ENCODE measurements at regions of chr2 and their contacts with region 1.

Region 1: DNA sequence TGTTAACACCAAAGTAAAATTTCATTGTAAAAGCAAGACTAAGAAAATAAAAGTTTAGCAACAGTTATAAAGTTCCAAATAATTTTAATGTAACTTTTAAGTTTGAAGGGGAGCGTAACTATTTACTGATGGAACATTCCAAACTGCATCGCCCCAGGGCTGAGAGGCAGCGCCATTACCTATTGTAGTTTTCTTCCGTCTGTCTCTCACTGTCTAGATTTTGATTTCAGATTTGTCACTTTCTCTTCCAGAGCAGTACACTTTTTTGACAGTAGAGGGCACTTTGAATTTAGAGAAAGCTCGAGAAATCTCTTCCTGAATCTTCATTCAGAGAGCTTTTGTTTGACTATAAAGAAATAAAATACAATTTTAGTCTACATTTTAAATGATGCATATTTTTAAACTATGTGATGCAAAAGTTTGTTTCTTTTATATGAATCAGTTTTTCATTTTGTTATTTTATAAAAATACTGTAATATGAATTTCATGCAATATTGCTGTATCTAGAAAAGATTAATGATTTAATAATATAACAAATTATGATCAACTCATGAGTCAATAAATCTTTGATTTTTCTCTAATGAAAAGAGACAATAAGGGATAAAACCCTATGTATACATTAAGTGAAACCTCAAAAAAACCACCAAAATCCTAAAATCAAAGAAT is 389.8 kb downstream of the FIGN start:
- DNase-seq: peak in 1 of 2 experiments; percentile 20
- H3K4me3 ChIP-seq: no peak overlapping the region
- H3K27ac ChIP-seq: no peak overlapping the region
- H3K4me1 ChIP-seq: peaks cover 13% of the 10 kb centered on the region
- H3K27me3 ChIP-seq: no peaks in the 10 kb centered on the region
- CTCF ChIP-seq: peak; percentile 71

Region 2: DNA sequence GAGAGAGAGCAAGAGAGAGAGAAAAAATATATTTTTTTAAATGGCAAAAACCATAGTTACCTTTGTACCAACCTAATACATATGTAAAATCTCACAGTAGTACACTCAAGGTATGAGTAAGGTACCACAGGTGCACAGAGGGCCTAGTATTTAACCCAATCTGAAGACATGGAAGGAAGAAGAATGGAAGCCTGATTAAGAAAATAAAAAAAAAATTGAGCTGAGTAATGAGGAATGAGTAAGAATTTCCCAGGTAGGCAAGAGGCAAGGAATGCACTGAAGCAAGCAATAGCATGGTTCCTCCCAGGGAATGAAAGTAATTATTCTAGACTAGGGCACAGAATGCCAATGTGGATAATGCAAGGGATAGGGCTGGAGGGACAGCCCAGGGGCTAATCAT is 95.6 kb after region 1 on chr2:
- CTCF ChIA-PET with region 1: no interaction called
- POLR2A ChIA-PET with region 1: no interaction called
- intact Hi-C with region 1: no loop called
- DNase-seq: no peak
- H3K4me3 ChIP-seq: no peak overlapping the region
- H3K27ac ChIP-seq: no peak overlapping the region
- H3K4me1 ChIP-seq: no peaks in the 10 kb centered on the region
- H3K27me3 ChIP-seq: no peaks in the 10 kb centered on the region
- CTCF ChIP-seq: no peak

Region 3: GRCh38 chr2:163573651-163574050 is 227.6 kb after region 1 on chr2:
- CTCF ChIA-PET with region 1: no interaction called
- POLR2A ChIA-PET with region 1: no interaction called
- intact Hi-C with region 1: loop called (anchors 2 kb)
- DNase-seq: peak; percentile 20 to 36
- H3K4me3 ChIP-seq: no peak overlapping the region
- H3K27ac ChIP-seq: no peak overlapping the region
- H3K4me1 ChIP-seq: peaks cover 12% of the 10 kb centered on the region
- H3K27me3 ChIP-seq: no peaks in the 10 kb centered on the region
- CTCF ChIP-seq: no peak

Region 4: GRCh38 chr2:163735685-163736432 is 389.8 kb after region 1 on chr2 and contains the start of gene FIGN:
- CTCF ChIA-PET with region 1: interaction called, 3 read pairs
- POLR2A ChIA-PET with region 1: no interaction called
- intact Hi-C with region 1: loop called (anchors 1 kb)
- DNase-seq: peak; percentile 57 to 61
- H3K4me3 ChIP-seq: peak within 1 kb of the TSS; percentile 91
- H3K27ac ChIP-seq: peak within 1 kb of the TSS; percentile 57
- H3K4me1 ChIP-seq: no peaks in the 10 kb centered on the region
- H3K27me3 ChIP-seq: no peaks in the 10 kb centered on the region
- CTCF ChIP-seq: no peak
- total RNA-seq, gene FIGN: 3.1 and 7.4 TPM in 2 replicates

Region 5: DNA sequence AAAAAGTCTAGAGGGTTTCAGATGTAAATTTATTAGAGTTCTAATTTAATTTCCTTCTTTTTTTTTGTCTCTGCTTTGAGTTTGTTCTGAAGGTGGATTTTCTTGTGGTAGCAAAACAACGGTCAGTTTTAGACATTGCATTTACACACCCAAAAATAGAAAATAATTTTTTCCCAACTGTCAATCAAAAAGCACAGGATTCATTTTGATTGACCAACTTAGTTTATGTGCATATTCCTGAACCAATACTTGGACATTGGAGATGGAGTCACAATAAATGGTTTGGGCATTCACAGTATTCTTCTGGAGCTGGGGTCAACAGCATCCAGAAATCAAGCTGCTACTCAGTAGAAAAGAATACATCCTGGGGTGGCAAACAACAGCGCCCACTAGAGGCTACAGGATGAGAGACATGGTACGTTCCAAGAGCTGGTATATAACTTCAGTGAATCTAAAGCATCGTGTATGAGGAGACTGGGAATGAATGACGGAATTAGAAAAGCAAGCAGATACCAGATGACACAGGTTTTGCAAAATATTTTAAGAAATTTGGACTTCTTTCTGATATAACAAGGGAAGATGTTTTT is 532.6 kb after region 1 on chr2:
- CTCF ChIA-PET with region 1: no interaction called
- POLR2A ChIA-PET with region 1: no interaction called
- intact Hi-C with region 1: loop called (anchors 10 kb)
- DNase-seq: peak in 1 of 2 experiments; percentile 1
- H3K4me3 ChIP-seq: no peak overlapping the region
- H3K27ac ChIP-seq: no peak overlapping the region
- H3K4me1 ChIP-seq: no peaks in the 10 kb centered on the region
- H3K27me3 ChIP-seq: no peaks in the 10 kb centered on the region
- CTCF ChIP-seq: peak; percentile 47; the same call in 1 of the 2 replicates

Region 6: GRCh38 chr2:164134336-164134735 is 788.3 kb after region 1 on chr2:
- CTCF ChIA-PET with region 1: no interaction called
- POLR2A ChIA-PET with region 1: no interaction called
- intact Hi-C with region 1: loop called (anchors 10 kb)
- DNase-seq: no peak
- H3K4me3 ChIP-seq: no peak overlapping the region
- H3K27ac ChIP-seq: no peak overlapping the region
- H3K4me1 ChIP-seq: no peaks in the 10 kb centered on the region
- H3K27me3 ChIP-seq: no peaks in the 10 kb centered on the region
- CTCF ChIP-seq: no peak

Region 7: GRCh38 chr2:164388511-164388910 is 1042.5 kb after region 1 on chr2:
- CTCF ChIA-PET with region 1: interaction called, 3 read pairs
- POLR2A ChIA-PET with region 1: interaction called, 5 read pairs
- intact Hi-C with region 1: loop called (anchors 5 kb)
- DNase-seq: peak; percentile 56 to 74
- H3K4me3 ChIP-seq: no peak overlapping the region; the same call in 1 of the 2 replicates
- H3K27ac ChIP-seq: peak overlapping the region; percentile 58
- H3K4me1 ChIP-seq: peaks cover 10% of the 10 kb centered on the region
- H3K27me3 ChIP-seq: no peaks in the 10 kb centered on the region
- CTCF ChIP-seq: no peak

Region 8: GRCh38 chr2:164538240-164538866 is 1192.3 kb after region 1 on chr2:
- CTCF ChIA-PET with region 1: no interaction called
- POLR2A ChIA-PET with region 1: interaction called, 3 read pairs
- intact Hi-C with region 1: loop called (anchors 2 kb)
- DNase-seq: peak in 1 of 2 experiments; percentile 41
- H3K4me3 ChIP-seq: no peak overlapping the region
- H3K27ac ChIP-seq: no peak overlapping the region
- H3K4me1 ChIP-seq: peaks cover 21% of the 10 kb centered on the region
- H3K27me3 ChIP-seq: no peaks in the 10 kb centered on the region
- CTCF ChIP-seq: peak; percentile 68